Activated B cell treated with CpG ODN at 0.5 μM for 24 hours (primary cell): ENCODE measurements at regions of chr2 and their contacts with region 1.

Region 1: GRCh38 chr2:165239230-165239629 is at the start of gene SCN2A:
- DNase-seq: no peak
- ATAC-seq: no peak
- H3K4me3 Mint-ChIP-seq: no peak within 1 kb of the TSS
- H3K27ac Mint-ChIP-seq: no peak within 1 kb of the TSS
- H3K4me1 Mint-ChIP-seq: no peaks in the 10 kb centered on the region
- H3K27me3 Mint-ChIP-seq: peaks cover 9% of the 10 kb centered on the region
- CTCF ChIP-seq: no peak
- total RNA-seq, gene SCN2A: 0.16 TPM in 1 of 2 replicates, not detected in the other

Region 2: DNA sequence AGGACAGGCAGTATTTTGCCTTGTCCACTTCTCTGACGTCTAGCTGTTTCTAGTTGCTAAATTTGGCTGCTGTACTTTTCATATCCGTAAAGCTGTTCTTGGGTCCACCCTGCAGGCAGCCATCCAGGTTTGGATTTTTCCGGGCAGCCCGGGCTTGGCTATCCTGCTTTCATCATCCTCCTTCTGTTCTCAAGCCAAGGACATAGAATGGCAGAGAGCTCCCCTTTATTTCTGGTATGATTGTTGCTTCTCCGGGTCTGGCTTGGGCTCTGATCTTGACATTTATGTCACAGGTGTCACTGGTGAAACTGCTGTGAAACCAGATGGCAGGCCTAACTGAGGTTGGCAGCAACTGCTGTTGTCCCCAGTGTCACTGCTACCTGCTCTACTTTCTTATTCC is 35.5 kb after region 1 on chr2:
- CTCF ChIA-PET with region 1: no interaction called
- POLR2A ChIA-PET with region 1: no interaction called
- intact Hi-C with region 1: no loop called
- DNase-seq: no peak
- ATAC-seq: no peak
- H3K4me3 Mint-ChIP-seq: no peak overlapping the region
- H3K27ac Mint-ChIP-seq: no peak overlapping the region
- H3K4me1 Mint-ChIP-seq: peaks cover 8% of the 10 kb centered on the region
- H3K27me3 Mint-ChIP-seq: no peaks in the 10 kb centered on the region
- CTCF ChIP-seq: no peak

Region 3: DNA sequence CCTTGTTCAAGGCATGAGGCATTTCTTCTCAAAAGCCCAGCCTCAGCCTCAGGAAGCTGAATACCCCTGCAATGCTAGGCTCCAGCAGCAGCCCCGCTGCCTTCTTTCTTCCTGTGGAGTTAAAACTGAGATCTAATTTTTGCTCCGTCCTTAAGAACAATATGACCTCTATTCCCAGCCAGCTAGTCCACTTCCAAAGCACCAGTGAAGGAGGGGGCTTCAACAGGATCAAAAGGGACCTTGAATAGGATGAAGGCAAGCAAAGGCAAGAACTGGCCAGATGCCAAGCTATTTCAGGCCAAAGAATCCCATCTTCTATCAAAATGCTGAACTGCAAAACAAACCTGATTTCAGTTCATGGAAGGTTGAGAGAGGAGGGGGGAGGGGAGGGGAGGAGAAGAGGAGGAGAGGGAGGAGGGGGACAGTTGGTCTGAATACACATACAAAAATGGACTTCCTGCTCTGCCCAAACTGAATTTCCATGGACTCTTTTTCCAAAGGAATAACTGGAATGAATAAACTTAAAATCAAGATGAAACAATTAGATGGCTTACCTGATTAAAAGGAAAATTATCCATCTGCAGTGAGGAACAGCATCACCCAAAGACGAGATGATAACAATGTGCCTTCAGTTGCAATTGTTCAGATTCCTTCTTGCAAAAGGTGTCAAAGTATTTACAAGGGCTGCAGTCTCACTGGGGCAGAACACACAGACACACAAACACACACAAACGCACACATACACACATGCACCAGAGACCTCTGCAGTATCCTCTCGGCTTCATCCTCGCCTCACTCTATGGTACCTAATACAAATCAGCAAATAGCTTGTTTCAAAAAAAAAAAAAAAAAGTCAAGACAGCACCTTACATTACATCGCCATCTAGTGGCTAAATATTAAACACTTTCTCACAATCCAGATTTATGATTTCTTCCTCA is 888.3 kb after region 1 on chr2 and contains the start of gene SCN1A:
- CTCF ChIA-PET with region 1: no interaction called
- POLR2A ChIA-PET with region 1: no interaction called
- intact Hi-C with region 1: loop called (anchors 5 kb)
- DNase-seq: no peak
- ATAC-seq: no peak
- H3K4me3 Mint-ChIP-seq: no peak within 1 kb of the TSS
- H3K27ac Mint-ChIP-seq: no peak within 1 kb of the TSS
- H3K4me1 Mint-ChIP-seq: peaks cover 2% of the 10 kb centered on the region
- H3K27me3 Mint-ChIP-seq: peaks cover 13% of the 10 kb centered on the region
- CTCF ChIP-seq: no peak
- total RNA-seq, gene SCN1A: not detected in 2 replicates